ENCODE measurements at regions of chr7 and their contacts with region 1.

Region 1: GRCh38 chr7:41940760-41941343 is 238.0 kb upstream of the INHBA start:
- DNase-seq: no peak

Region 2: GRCh38 chr7:41817386-41817785 is 123.5 kb before region 1 on chr7:
- intact Hi-C with region 1: no loop called
- DNase-seq: no peak

Region 3: GRCh38 chr7:42311195-42311594 is 370.3 kb after region 1 on chr7:
- intact Hi-C with region 1: loop called (anchors 5 kb)
- DNase-seq: no peak

Region 4: GRCh38 chr7:42831718-42832431 is 891.0 kb after region 1 on chr7:
- intact Hi-C with region 1: loop called (anchors 5 kb)
- DNase-seq: no peak

Measured in cardiac septum (tissue), 1 donor.